ENCODE measurements at regions of chr16 and their contacts with region 1.

Region 1: GRCh38 chr16:19113453-19114351 is at the start of gene ITPRIPL2:
- DNase-seq: peak; percentile 20 to 88 (median 37)

Region 2: GRCh38 chr16:19071811-19072777 is 41.6 kb before region 1 on chr16:
- intact Hi-C with region 1: no loop called
- DNase-seq: peak in 6 of 10 donors; percentile 39 to 91 (median 58)

Region 3: GRCh38 chr16:19094541-19095365 is 18.9 kb before region 1 on chr16:
- intact Hi-C with region 1: no loop called
- DNase-seq: no peak

Region 4: DNA sequence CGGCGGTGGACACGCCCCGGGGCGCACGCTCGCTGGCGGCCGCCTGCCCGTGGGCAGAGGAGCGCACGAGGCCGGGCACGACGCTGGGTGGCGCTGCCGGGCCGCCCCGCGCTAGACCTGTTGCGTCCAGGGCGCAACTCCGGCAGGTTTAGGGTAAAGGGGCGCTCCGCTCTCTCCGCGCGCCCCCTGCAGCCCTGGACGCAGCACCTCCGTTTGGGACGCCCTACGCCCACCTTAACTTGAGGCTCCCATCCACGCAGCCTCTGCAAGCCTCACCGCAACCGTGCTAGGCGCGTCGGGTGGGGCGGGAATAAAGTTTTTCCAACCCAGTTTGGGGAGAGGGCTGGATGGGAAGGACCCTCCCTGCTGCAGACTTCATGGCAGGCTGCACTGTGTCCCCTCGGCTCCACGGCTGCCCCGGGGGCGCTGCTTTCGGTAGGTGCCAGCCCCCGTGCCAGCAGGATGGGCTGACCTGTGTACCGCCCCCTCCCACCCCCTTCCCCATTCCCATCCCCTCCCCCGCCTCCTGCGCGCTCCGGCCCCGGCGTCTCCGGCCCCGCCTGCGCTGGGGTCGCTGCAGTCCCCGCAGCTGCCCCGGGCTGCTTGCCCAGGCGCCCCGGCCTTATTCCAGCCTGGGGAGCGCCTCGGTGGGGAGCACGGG is 54.1 kb after region 1 on chr16 and contains the start of gene SYT17:
- intact Hi-C with region 1: loop called (anchors 10 kb)
- DNase-seq: peak in 9 of 10 donors; percentile 28 to 94 (median 52)

Region 5: GRCh38 chr16:19252904-19253303 is 139.2 kb after region 1 on chr16:
- intact Hi-C with region 1: no loop called
- DNase-seq: no peak